ENCODE measurements at regions of chr12 and their contacts with region 1.

Region 1: GRCh38 chr12:2783936-2784600 is 10.7 kb upstream of the FKBP4 start:
- DNase-seq: peak in 2 of 3 donors; percentile 51 to 53
- H3K4me3 ChIP-seq: peak overlapping the region in 5 of 7 experiments; percentile 42 to 79 (median 60)
- H3K27ac ChIP-seq: no peak overlapping the region
- H3K4me1 ChIP-seq: peaks cover 0 to 12% (median 9%) of the 10 kb centered on the region in 4 experiments
- H3K27me3 ChIP-seq: peaks cover 0 to 3% (median 0%) of the 10 kb centered on the region in 5 experiments

Region 2: GRCh38 chr12:2640705-2641104 is 143.4 kb before region 1 on chr12:
- CTCF ChIA-PET with region 1: no interaction called
- POLR2A ChIA-PET with region 1: no interaction called
- DNase-seq: peak; percentile 64 to 90 (median 83)
- H3K4me3 ChIP-seq: peak overlapping the region in 1 of 7 experiments; percentile 4
- H3K27ac ChIP-seq: peak overlapping the region in 1 of 2 experiments; percentile 51
- H3K4me1 ChIP-seq: peaks cover 18 to 92% (median 71%) of the 10 kb centered on the region in 4 experiments
- H3K27me3 ChIP-seq: no peaks in the 10 kb centered on the region

Region 3: DNA sequence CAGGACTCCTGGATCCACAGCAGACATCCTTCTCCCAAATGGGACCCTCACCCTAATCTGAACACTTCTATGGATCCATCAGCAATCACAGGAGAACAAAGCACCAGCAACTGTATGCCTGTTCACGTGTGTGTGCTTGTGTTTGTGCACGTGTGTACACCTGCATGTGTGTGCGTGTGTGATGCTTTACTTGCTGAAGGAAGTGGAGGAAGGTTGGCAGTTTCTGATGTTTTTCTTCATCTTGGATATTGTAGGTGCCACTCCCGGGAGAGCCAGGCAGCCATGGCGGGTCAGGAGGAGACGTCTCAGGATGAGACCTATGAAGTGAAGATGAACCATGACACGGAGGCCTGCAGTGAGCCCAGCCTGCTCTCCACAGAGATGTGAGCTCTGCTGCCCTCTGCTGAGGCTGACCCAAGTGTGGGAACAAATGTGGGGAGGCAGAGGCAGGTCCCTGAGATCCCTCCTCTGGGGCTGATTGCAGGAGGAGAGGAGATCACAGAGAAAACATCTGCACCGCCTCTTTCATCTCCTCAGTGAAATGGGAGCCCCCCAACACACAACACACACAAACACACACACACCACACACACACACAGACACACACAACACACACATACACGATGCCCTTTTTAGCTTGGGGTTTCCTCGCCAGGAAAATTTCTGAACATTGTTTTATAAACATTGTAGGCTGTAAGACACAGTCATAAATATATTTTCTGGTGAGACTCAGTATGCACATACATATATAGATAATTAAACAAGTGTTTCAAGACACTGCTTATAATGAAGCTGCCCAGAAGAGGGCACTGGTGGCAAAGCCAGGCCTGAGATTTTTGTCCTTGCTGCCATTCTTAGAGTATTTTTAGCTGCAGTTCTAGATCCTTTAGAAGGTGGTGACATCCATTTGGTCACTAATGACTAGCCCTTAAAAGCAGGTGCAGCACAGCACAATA is 101.5 kb before region 1 on chr12:
- CTCF ChIA-PET with region 1: interaction called, 66 read pairs
- POLR2A ChIA-PET with region 1: no interaction called
- DNase-seq: peak; percentile 80 to 94 (median 91)
- H3K4me3 ChIP-seq: no peak overlapping the region
- H3K27ac ChIP-seq: no peak overlapping the region
- H3K4me1 ChIP-seq: peaks cover 3 to 20% (median 16%) of the 10 kb centered on the region in 4 experiments
- H3K27me3 ChIP-seq: no peaks in the 10 kb centered on the region

Region 4: GRCh38 chr12:2691006-2691344 is 93.1 kb before region 1 on chr12:
- CTCF ChIA-PET with region 1: interaction called, 28 read pairs
- POLR2A ChIA-PET with region 1: interaction called, 3 read pairs
- DNase-seq: peak; percentile 79 to 90 (median 88)
- H3K4me3 ChIP-seq: peak overlapping the region; percentile 67 to 87 (median 77)
- H3K27ac ChIP-seq: peak overlapping the region in 1 of 2 experiments; percentile 77
- H3K4me1 ChIP-seq: peaks cover 11 to 46% (median 40%) of the 10 kb centered on the region in 4 experiments
- H3K27me3 ChIP-seq: no peaks in the 10 kb centered on the region

Region 5: DNA sequence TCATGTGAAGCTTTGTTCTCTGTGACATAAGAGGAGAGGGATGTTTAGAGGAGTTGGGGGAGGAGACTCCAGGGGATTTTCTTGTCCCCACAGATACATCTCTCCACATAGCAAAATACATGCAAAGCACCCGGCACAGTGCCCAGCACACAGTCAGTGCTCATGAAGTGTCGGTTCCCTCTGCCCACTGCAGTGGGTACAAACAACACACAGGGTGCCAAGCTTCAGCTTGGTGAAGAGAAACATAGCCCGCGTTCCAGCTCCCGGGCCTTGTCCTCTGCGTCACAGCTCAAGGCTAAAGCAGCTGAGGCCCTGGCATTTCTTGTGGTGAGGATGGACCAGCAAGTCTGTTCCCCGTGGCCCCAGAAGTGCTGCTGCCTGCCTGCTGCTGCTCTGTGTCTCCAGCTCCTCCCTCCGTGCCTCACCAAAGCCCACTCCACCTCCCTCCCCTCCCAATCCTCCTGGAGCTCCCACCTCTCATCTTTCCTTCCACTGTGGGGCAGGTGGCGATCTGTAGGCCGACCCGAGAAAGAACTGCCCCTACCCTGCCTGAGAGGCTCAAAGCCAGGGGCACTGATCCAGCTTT is 46.3 kb before region 1 on chr12:
- CTCF ChIA-PET with region 1: interaction called, 10 read pairs
- POLR2A ChIA-PET with region 1: no interaction called
- DNase-seq: no peak
- H3K4me3 ChIP-seq: no peak overlapping the region
- H3K27ac ChIP-seq: no peak overlapping the region
- H3K4me1 ChIP-seq: peaks cover 9 to 38% (median 36%) of the 10 kb centered on the region in 4 experiments
- H3K27me3 ChIP-seq: no peaks in the 10 kb centered on the region

Region 6: GRCh38 chr12:2752676-2753371 is 31.2 kb before region 1 on chr12:
- CTCF ChIA-PET with region 1: interaction called, 21 read pairs
- POLR2A ChIA-PET with region 1: no interaction called
- DNase-seq: peak; percentile 80 to 91 (median 90)
- H3K4me3 ChIP-seq: no peak overlapping the region
- H3K27ac ChIP-seq: no peak overlapping the region
- H3K4me1 ChIP-seq: peaks cover 0 to 6% (median 4%) of the 10 kb centered on the region in 4 experiments
- H3K27me3 ChIP-seq: peaks cover 3 to 36% (median 10%) of the 10 kb centered on the region in 5 experiments

Region 7: GRCh38 chr12:2769871-2770533 is 14.1 kb before region 1 on chr12:
- CTCF ChIA-PET with region 1: interaction called, 17 read pairs
- POLR2A ChIA-PET with region 1: no interaction called
- DNase-seq: no peak
- H3K4me3 ChIP-seq: no peak overlapping the region
- H3K27ac ChIP-seq: no peak overlapping the region
- H3K4me1 ChIP-seq: no peaks in the 10 kb centered on the region
- H3K27me3 ChIP-seq: peaks cover 0 to 2% (median 0%) of the 10 kb centered on the region in 5 experiments

Region 8: GRCh38 chr12:2794736-2795289 is 10.7 kb after region 1 on chr12 and contains the start of gene FKBP4:
- CTCF ChIA-PET with region 1: interaction called, 18 read pairs
- POLR2A ChIA-PET with region 1: no interaction called
- DNase-seq: peak; percentile 85 to 89 (median 87)
- H3K4me3 ChIP-seq: peak within 1 kb of the TSS; percentile 62 to 87 (median 82)
- H3K27ac ChIP-seq: peak within 1 kb of the TSS in 1 of 2 experiments; percentile 38
- H3K4me1 ChIP-seq: peaks cover 7 to 39% (median 34%) of the 10 kb centered on the region in 4 experiments
- H3K27me3 ChIP-seq: no peaks in the 10 kb centered on the region

Region 9: DNA sequence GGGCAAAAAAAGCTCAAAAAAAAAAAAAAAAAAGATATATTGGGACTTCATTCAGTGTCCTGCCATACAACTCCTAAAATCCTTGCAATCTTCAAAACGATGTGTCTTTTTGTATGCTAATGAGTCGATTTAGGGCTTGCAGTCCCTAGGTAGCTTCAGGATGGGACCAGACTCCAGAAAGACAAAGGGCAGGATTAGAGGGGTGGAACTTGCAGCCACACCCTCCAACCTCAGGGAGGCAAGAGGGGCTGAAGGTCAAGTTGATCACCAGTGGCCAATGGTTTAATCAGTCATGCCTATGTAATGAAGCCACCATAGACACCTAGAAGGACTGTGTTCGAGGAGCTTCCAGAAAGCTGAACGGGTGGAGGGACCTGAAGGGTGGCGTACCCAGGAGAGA is 204.4 kb after region 1 on chr12:
- CTCF ChIA-PET with region 1: no interaction called
- POLR2A ChIA-PET with region 1: no interaction called
- DNase-seq: no peak
- H3K4me3 ChIP-seq: no peak overlapping the region
- H3K27ac ChIP-seq: no peak overlapping the region
- H3K4me1 ChIP-seq: no peaks in the 10 kb centered on the region
- H3K27me3 ChIP-seq: no peaks in the 10 kb centered on the region